Mammary epithelial cell (primary cell): ENCODE measurements at regions of chr12 and their contacts with region 1.

Region 1: DNA sequence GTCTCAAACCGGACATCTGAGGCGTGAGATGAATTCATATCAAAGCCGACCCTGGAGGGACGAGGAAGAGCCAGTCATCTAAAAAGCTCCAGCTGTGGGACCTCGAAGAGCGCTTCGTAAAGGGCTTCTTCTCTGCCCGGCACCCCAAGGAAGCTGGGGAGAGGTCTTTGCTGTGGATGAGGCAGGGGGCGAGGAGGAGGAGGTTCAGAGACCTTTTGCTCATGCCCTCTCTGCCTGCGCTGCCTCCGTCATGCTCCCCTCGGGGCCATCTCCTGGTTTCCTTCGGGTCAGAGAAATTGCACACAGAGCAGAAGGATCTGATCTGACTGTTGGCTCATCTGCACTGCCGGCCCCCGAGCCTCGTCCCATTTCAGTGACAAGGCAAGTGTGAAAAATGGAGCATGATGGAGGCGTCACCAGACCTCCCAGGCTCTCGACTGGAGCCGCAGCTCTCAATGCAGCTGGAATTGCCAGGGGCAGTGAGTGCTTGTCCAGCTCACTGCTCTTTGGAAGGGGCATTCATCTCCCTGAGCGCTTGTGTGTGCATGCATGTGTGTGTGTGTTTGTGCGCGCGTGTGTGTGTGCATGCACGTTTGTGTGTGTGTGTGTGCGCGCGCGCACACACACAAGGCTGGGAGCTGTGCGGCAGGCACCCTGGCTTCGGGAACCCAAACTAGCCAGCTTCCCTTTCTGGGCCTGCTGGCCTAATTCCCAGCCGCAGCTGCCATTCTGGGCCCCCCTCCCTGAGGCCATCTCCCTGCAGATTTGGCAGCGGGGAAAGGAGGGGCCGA is 9.2 kb downstream of the CABP1 start:
- DNase-seq: no peak
- H3K4me3 ChIP-seq: no peak overlapping the region
- H3K27ac ChIP-seq: no peak overlapping the region
- H3K4me1 ChIP-seq: peaks cover 9% of the 10 kb centered on the region
- H3K27me3 ChIP-seq: peaks cover 1% of the 10 kb centered on the region
- CTCF ChIP-seq: no peak

Region 2: GRCh38 chr12:120437754-120438494 is 211.7 kb before region 1 on chr12 and contains the start of gene COX6A1:
- CTCF ChIA-PET with region 1: no interaction called
- dilution Hi-C with region 1: no loop called
- in situ Hi-C with region 1: no loop called
- intact Hi-C with region 1: loop called (anchors 1 kb)
- DNase-seq: peak; percentile 98
- H3K4me3 ChIP-seq: peak within 1 kb of the TSS; percentile 47 to 99 (median 82)
- H3K27ac ChIP-seq: peak within 1 kb of the TSS; percentile 61
- H3K4me1 ChIP-seq: peaks cover 14% of the 10 kb centered on the region
- H3K27me3 ChIP-seq: no peaks in the 10 kb centered on the region
- CTCF ChIP-seq: peak in 1 of 2 donors; percentile 21
- total RNA-seq, gene COX6A1: 306 to 422 TPM

Region 3: GRCh38 chr12:120554678-120555077 is 95.0 kb before region 1 on chr12:
- CTCF ChIA-PET with region 1: no interaction called
- dilution Hi-C with region 1: no loop called
- in situ Hi-C with region 1: no loop called
- intact Hi-C with region 1: no loop called
- DNase-seq: no peak
- H3K4me3 ChIP-seq: no peak overlapping the region
- H3K27ac ChIP-seq: no peak overlapping the region
- H3K4me1 ChIP-seq: peaks cover 3% of the 10 kb centered on the region
- H3K27me3 ChIP-seq: no peaks in the 10 kb centered on the region
- CTCF ChIP-seq: no peak

Region 4: GRCh38 chr12:120686690-120687577 is 37.3 kb after region 1 on chr12 and contains the start of gene MLEC:
- CTCF ChIA-PET with region 1: interaction called, 3 read pairs
- dilution Hi-C with region 1: no loop called
- in situ Hi-C with region 1: no loop called
- intact Hi-C with region 1: loop called (anchors 2 kb)
- DNase-seq: peak; percentile 98
- H3K4me3 ChIP-seq: peak within 1 kb of the TSS; percentile 73 to 98 (median 82)
- H3K27ac ChIP-seq: peak within 1 kb of the TSS; percentile 89
- H3K4me1 ChIP-seq: peaks cover 28% of the 10 kb centered on the region
- H3K27me3 ChIP-seq: no peaks in the 10 kb centered on the region
- CTCF ChIP-seq: peak in 1 of 2 donors; percentile 24
- total RNA-seq, gene MLEC: 64.7 to 114 TPM

Region 5: DNA sequence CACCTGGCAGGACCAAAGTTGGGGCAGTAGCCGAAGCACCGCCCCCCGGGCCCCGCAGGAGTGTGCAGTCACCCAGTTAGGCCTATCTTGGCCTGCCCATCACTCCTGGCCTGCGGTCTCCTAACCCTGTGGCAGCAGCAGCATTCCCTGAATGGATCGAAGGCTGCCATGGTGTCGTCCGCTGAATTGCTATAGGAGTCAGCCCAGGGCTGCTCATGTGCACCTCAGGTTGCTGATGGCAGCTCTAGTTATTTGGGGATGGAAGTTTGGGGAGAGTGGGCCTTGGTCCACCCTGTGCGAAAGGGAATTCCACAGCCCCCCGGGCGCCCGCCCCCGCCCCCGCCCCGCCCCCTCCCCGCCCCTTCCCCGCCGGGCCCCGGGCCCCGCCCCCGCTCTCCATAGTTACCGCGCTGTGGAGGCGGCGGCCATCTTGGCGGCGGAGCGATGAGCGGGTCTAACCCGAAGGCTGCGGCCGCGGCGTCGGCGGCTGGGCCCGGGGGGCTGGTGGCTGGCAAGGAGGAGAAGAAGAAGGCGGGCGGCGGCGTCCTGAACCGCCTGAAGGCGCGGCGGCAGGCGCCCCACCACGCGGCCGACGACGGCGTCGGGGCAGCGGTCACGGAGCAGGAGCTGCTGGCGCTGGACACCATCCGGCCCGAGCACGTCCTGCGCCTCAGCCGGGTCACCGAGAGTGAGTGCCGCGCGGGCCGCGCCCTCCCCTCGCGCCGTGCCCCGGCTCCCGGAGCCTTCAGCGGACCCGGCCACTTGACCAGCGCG is 60.6 kb after region 1 on chr12 and contains the start of gene UNC119B:
- CTCF ChIA-PET with region 1: no interaction called
- dilution Hi-C with region 1: no loop called
- in situ Hi-C with region 1: loop called in 1 of 2 experiments (anchors 5 kb)
- intact Hi-C with region 1: loop called (anchors 1 kb)
- DNase-seq: peak; percentile 50
- H3K4me3 ChIP-seq: peak within 1 kb of the TSS; percentile 81 to 97 (median 93)
- H3K27ac ChIP-seq: peak within 1 kb of the TSS; percentile 84
- H3K4me1 ChIP-seq: peaks cover 15% of the 10 kb centered on the region
- H3K27me3 ChIP-seq: peaks cover 1% of the 10 kb centered on the region
- CTCF ChIP-seq: no peak
- total RNA-seq, gene UNC119B: 28.0 to 33.3 TPM

Region 6: DNA sequence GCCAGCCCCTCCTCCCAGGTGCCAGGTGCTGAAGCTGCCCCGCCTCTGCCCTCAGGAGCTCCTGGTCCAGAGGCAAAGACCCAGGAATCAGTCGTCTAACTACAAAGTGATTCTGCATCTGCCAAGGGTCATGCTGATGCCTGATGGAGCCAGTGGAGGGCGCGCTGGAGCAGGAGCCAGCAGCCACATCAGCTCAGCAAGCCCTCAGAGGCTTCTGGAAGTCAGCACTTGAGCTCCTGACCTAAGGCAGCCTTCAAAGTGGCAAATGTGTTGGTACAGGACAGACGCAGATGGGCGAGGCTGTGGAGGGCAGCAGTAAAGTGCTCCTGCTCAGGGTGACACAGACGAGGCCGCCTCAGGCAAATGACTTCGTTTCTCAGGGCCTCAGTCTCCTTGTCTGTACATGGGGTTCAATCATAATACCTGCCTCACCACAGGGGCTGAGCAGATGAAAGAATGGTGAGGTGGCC is 355.7 kb after region 1 on chr12:
- CTCF ChIA-PET with region 1: interaction called, 3 read pairs
- dilution Hi-C with region 1: no loop called
- in situ Hi-C with region 1: no loop called
- intact Hi-C with region 1: loop called (anchors 2 kb)
- DNase-seq: peak; percentile 32
- H3K4me3 ChIP-seq: no peak overlapping the region
- H3K27ac ChIP-seq: no peak overlapping the region
- H3K4me1 ChIP-seq: no peaks in the 10 kb centered on the region
- H3K27me3 ChIP-seq: no peaks in the 10 kb centered on the region
- CTCF ChIP-seq: peak; percentile 67 to 78